B cell (primary cell): ENCODE measurements at regions of chr13 and their contacts with region 1.

Region 1: DNA sequence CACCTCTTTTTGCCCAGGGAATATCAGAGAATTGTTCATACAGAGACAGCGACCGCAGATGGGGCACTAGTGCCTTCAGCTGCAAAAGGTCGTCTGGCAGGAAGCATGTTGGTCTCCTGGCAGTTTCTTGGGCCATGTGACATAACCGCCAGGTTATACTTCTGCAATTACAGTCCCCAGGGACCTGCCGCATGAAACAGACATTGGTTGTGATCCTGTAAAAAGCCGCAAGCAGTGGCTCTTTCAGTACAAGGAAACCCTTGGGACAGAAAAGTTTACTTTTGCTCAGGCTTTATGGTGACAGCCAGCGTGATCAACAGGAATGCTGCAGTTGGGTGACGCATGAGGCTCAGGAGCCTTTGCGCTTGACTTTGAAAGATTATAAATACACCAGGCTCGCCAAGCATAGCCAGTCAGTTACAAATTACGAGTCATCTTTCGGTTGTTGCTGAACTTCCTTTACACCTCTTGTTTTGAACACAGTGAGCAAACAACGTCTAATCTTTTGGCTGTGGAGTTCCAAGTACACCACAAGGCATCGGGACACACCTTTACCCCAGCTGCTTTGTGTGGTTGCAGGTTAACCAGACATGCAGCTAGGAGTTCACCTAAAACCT is 50.5 kb upstream of the UBE2L5 start:
- DNase-seq: peak; percentile 98
- ATAC-seq: peak; percentile 83
- H3K4me3 ChIP-seq: peak overlapping the region; percentile 13 to 47 (median 45)
- H3K4me3 Mint-ChIP-seq: peak overlapping the region; percentile 91
- H3K27ac ChIP-seq: peak overlapping the region; percentile 76 to 78
- H3K27ac Mint-ChIP-seq: peak overlapping the region; percentile 94
- H3K4me1 ChIP-seq: peaks cover 75 to 81% of the 10 kb centered on the region in 2 donors
- H3K4me1 Mint-ChIP-seq: peaks cover 84% of the 10 kb centered on the region
- H3K27me3 ChIP-seq: no peaks in the 10 kb centered on the region
- H3K27me3 Mint-ChIP-seq: no peaks in the 10 kb centered on the region
- CTCF ChIP-seq: no peak

Region 2: DNA sequence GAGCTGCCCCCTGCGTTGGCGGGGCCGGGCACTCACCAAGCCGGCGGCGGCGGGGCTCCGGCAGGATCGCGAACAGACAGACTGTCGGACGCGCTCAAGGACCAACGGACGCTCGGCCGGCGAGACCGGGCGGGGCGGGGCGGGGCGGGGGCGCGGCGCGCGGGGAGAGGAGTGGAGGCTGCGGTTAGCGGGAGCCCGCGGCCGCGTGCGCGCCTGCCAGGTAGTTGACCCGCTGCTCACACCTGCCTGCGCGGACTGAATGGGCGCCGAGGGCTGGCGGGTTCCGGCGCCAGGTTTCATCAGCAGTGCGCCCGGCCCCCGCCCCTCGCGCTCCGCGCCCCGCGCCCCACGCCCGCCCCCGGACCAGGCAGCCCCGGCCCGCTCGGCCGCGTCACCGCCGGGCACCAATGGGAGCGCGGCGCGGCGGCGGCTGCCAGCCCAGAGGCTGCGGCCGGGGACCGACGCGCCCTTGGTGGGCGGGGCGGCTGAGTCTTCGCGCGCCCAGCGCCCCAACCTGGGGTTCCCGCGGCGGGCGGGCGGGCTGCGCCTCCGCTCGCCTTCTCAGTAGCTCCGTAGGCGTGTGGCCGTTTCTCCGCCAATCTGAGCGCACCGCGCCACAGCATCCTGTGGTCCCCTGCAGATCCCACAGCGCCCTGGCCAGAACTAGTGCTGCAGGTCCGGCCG is 776.2 kb before region 1 on chr13 and contains the start of gene SLC7A1:
- CTCF ChIA-PET with region 1: no interaction called
- POLR2A ChIA-PET with region 1: no interaction called
- intact Hi-C with region 1: loop called (anchors 5 kb)
- DNase-seq: peak; percentile 91
- ATAC-seq: peak; percentile 91
- H3K4me3 ChIP-seq: peak within 1 kb of the TSS; percentile 49 to 89 (median 68)
- H3K4me3 Mint-ChIP-seq: peak within 1 kb of the TSS; percentile 92
- H3K27ac ChIP-seq: peak within 1 kb of the TSS; percentile 40 to 82
- H3K27ac Mint-ChIP-seq: peak within 1 kb of the TSS; percentile 92
- H3K4me1 ChIP-seq: peaks cover 9 to 13% of the 10 kb centered on the region in 2 donors
- H3K4me1 Mint-ChIP-seq: peaks cover 34% of the 10 kb centered on the region
- H3K27me3 ChIP-seq: no peaks in the 10 kb centered on the region
- H3K27me3 Mint-ChIP-seq: peaks cover 6% of the 10 kb centered on the region
- CTCF ChIP-seq: no peak
- total RNA-seq, gene SLC7A1: 23.1 and 24.2 TPM in 2 replicates

Region 3: DNA sequence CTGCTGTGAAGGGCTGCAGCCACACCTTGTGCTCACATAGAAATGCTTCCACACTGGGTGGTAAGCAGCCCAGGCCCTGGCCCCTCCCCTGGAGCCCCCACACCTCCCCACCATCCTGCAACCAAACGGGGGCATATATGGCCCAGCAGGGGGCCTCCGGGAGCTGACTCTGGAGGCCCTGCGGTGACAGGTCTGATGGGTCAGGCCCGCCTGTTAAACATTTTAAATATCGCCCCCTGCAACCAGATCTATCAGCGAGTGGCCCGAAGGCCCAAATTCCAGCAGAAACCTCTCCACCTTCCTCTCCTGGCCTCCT is 16.4 kb before region 1 on chr13:
- CTCF ChIA-PET with region 1: interaction called, 39 read pairs
- POLR2A ChIA-PET with region 1: interaction called, 5 read pairs
- intact Hi-C with region 1: no loop called
- DNase-seq: peak; percentile 83
- ATAC-seq: peak; percentile 96
- H3K4me3 ChIP-seq: peak overlapping the region in 1 of 5 experiments; percentile 12
- H3K4me3 Mint-ChIP-seq: peak overlapping the region; percentile 72
- H3K27ac ChIP-seq: no peak overlapping the region
- H3K27ac Mint-ChIP-seq: peak overlapping the region; percentile 60
- H3K4me1 ChIP-seq: peaks cover 21 to 32% of the 10 kb centered on the region in 2 donors
- H3K4me1 Mint-ChIP-seq: peaks cover 30% of the 10 kb centered on the region
- H3K27me3 ChIP-seq: no peaks in the 10 kb centered on the region
- H3K27me3 Mint-ChIP-seq: no peaks in the 10 kb centered on the region
- CTCF ChIP-seq: peak; percentile 79

Region 4: DNA sequence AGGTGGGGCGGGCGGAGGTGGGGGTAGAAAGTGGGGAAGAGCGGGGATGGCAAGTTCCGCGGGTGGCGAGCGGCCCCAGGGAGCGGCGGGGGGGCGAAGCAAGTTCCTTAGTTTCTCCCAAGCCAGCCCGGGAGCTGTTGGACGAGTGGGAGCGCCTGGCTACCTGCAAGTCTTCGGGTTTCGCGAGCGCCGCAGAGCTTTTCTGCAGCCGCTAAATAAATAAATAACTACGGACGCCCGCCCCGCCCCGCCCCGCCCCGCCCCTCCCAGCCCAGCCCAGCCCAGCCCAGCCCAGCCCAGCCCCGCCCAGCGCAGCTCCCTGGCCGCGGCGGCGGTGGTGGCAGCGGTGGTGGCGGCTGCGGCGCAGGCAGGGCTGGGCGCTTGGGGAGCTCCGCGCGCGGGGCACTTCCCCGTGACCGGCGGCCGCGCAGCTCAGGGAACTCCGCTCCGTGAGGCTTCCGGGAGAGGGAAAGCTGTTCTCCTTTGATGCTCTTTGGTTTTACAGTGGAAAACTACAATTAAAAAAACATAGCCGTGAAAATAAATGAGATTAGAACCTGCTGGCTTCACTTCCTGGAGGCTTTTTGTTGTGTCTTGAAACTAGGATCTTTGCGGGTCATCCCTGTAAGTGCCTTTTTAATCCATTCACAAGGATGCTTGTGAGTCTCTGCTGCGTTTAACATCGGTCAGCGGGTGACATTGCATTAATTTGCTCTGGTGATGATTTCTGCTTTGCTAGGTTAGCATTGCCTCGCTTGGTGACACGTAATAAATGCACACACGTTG is 50.5 kb after region 1 on chr13 and contains the start of gene UBE2L5:
- CTCF ChIA-PET with region 1: interaction called, 5 read pairs
- POLR2A ChIA-PET with region 1: interaction called, 8 read pairs
- intact Hi-C with region 1: loop called (anchors 1 kb)
- DNase-seq: peak; percentile 85
- ATAC-seq: peak; percentile 93
- H3K4me3 ChIP-seq: peak within 1 kb of the TSS; percentile 57 to 83 (median 77)
- H3K4me3 Mint-ChIP-seq: peak within 1 kb of the TSS; percentile 92
- H3K27ac ChIP-seq: peak within 1 kb of the TSS; percentile 45 to 71
- H3K27ac Mint-ChIP-seq: peak within 1 kb of the TSS; percentile 90
- H3K4me1 ChIP-seq: peaks cover 18 to 42% of the 10 kb centered on the region in 2 donors
- H3K4me1 Mint-ChIP-seq: peaks cover 47% of the 10 kb centered on the region
- H3K27me3 ChIP-seq: no peaks in the 10 kb centered on the region
- H3K27me3 Mint-ChIP-seq: no peaks in the 10 kb centered on the region
- CTCF ChIP-seq: no peak
- total RNA-seq, gene UBE2L5: 0.57 and 0.58 TPM in 2 replicates

Region 5: DNA sequence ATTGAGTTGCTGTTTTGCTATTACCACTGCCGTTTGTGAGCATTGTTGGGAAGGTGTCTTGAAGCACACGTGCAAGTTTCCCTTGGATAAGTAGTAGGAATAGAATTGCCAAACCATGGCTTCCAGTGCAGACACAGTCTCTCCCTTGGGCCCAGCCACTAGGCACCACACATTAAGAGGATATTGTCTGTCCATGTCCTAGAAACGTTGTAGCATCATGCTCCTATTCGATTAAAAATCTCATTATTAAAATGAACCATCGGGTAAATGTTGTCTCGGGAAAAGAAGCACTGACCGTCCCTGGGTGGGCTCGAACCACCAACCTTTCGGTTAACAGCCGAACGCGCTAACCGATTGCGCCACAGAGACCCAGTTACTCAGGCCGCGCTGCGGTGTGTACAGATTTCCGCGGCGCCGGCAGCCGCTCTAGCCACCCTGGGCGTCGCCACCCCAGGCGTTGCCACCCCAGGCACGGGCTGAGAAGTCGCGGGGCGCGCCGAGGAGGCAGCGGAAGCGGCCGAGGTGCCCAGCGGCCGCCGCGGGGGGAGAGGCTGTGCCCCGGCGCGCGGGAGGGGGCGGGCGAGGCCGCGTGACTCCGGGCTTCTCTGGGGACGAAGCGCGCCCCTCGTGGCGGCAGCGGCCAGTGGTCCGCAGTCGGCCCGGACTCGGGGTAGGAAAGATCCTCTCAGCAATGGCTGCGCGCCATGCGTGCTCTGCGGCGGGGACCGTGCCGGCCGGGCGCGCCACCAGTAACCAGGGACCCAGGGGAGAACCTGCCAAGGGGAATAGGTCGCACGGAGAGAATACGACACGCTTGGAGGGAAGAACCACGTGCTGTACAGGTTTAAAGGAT is 302.1 kb after region 1 on chr13:
- CTCF ChIA-PET with region 1: interaction called, 3 read pairs
- POLR2A ChIA-PET with region 1: interaction called, 4 read pairs
- intact Hi-C with region 1: loop called (anchors 5 kb)
- DNase-seq: peak; percentile 97
- ATAC-seq: peak; percentile 92
- H3K4me3 ChIP-seq: peak overlapping the region; percentile 52 to 73 (median 65)
- H3K4me3 Mint-ChIP-seq: peak overlapping the region; percentile 97
- H3K27ac ChIP-seq: peak overlapping the region; percentile 47 to 57
- H3K27ac Mint-ChIP-seq: peak overlapping the region; percentile 99
- H3K4me1 ChIP-seq: peaks cover 8 to 19% of the 10 kb centered on the region in 2 donors
- H3K4me1 Mint-ChIP-seq: peaks cover 30% of the 10 kb centered on the region
- H3K27me3 ChIP-seq: no peaks in the 10 kb centered on the region
- H3K27me3 Mint-ChIP-seq: no peaks in the 10 kb centered on the region
- CTCF ChIP-seq: peak; percentile 73

Region 6: GRCh38 chr13:31352467-31352866 is 980.7 kb after region 1 on chr13:
- CTCF ChIA-PET with region 1: no interaction called
- POLR2A ChIA-PET with region 1: no interaction called
- intact Hi-C with region 1: no loop called
- DNase-seq: no peak
- ATAC-seq: no peak
- H3K4me3 ChIP-seq: no peak overlapping the region
- H3K4me3 Mint-ChIP-seq: no peak overlapping the region
- H3K27ac ChIP-seq: no peak overlapping the region
- H3K27ac Mint-ChIP-seq: no peak overlapping the region
- H3K4me1 ChIP-seq: no peaks in the 10 kb centered on the region
- H3K4me1 Mint-ChIP-seq: no peaks in the 10 kb centered on the region
- H3K27me3 ChIP-seq: no peaks in the 10 kb centered on the region
- H3K27me3 Mint-ChIP-seq: peaks cover 11% of the 10 kb centered on the region
- CTCF ChIP-seq: no peak